Endothelial cell of umbilical vein (primary cell): ENCODE measurements at regions of chrX and their contacts with region 1.

Region 1: GRCh38 chrX:16953606-16954220 is 7.3 kb downstream of the REPS2 start:
- DNase-seq: peak; percentile 73
- H3K4me3 ChIP-seq: no peak overlapping the region
- H3K27ac ChIP-seq: peak overlapping the region; percentile 82
- H3K4me1 ChIP-seq: peaks cover 26% of the 10 kb centered on the region
- H3K27me3 ChIP-seq: no peaks in the 10 kb centered on the region
- CTCF ChIP-seq: no peak
- POLR2A ChIP-seq: no peak

Region 2: GRCh38 chrX:17038681-17039161 is 85.0 kb after region 1 on chrX:
- CTCF ChIA-PET with region 1: no interaction called
- POLR2A ChIA-PET with region 1: no interaction called
- dilution Hi-C with region 1: no loop called
- intact Hi-C with region 1: loop called (anchors 5 kb)
- DNase-seq: peak; percentile 43
- H3K4me3 ChIP-seq: no peak overlapping the region
- H3K27ac ChIP-seq: no peak overlapping the region
- H3K4me1 ChIP-seq: peaks cover 13% of the 10 kb centered on the region
- H3K27me3 ChIP-seq: no peaks in the 10 kb centered on the region
- CTCF ChIP-seq: no peak
- POLR2A ChIP-seq: no peak

Region 3: DNA sequence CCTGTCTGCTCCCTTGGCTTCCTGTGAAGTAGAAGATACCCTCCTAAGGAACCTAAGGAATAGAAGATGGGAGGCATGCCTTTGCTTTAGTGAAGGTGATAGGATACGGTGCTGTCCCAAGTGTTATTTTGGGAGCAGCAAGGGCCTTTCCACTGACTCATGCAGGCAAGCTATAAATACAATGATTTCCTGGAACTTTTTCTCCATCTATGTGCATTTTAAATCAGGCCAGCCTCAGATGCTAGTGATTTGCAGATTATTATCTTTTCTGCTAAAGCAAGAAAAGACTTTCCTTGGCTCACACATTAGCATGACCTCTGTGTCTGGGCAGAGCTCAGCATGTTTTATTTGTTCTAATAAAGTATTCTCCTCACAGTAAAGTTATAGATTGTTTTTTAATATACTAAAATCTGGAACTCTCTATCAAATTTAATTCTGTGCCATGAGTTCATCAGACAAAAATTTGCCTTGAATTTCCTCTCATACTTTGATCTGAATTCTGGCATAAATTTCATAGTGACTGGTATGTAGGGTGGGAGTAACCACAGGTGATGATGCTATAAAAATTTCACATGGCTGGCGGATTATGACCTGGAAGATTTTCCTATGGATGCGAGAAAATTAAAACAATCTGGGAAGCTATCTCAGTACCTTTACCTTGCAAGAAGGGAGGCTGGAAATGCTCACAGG is 124.5 kb after region 1 on chrX:
- CTCF ChIA-PET with region 1: no interaction called
- POLR2A ChIA-PET with region 1: no interaction called
- dilution Hi-C with region 1: no loop called
- intact Hi-C with region 1: no loop called
- DNase-seq: peak; percentile 26
- H3K4me3 ChIP-seq: no peak overlapping the region
- H3K27ac ChIP-seq: peak overlapping the region; percentile 28
- H3K4me1 ChIP-seq: peaks cover 14% of the 10 kb centered on the region
- H3K27me3 ChIP-seq: no peaks in the 10 kb centered on the region
- CTCF ChIP-seq: no peak
- POLR2A ChIP-seq: no peak